ENCODE measurements at regions of chr15 and their contacts with region 1.

Region 1: DNA sequence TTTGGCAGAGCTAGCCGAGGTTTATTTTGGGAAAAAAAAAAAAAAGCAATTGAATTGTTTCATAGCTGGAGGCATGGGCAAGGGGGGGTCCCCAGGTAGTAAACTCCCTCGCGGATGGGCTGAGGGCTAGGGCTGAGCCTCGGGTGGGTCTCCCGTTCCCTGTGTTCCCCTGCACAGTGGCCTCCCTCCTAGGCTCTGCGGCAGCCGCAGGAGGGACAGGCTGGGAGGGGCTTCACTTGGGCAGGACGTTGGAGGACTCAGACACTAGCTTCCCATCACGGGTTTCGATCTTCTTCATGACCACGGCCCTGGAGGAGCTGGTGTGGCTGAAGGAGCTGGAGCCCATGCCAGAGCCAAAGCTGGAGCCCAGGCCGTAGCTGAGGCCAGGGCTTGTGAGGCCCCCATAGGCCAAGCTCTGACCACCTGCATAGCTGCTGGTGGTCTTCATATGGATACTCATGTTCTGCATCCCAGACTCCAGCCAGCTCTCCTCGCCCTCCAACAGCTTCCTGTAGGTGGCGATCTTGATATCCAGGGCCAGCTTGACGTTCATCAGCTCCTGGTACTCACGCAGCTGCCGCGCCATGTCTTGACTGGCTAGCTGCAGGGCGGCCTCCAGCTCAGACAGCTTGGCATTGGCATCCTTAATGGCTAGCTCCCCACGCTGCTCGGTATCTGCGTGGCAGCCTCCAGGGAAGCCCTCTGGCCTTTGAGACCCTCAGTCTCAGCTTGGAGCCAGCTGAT is 64.0 kb upstream of the CDAN1 start:
- DNase-seq: no peak
- ATAC-seq: no peak
- H3K4me3 ChIP-seq: no peak overlapping the region
- H3K27ac ChIP-seq: no peak overlapping the region
- H3K4me1 ChIP-seq: no peaks in the 10 kb centered on the region
- H3K27me3 ChIP-seq: no peaks in the 10 kb centered on the region

Region 2: GRCh38 chr15:42694398-42694797 is 106.5 kb before region 1 on chr15:
- intact Hi-C with region 1: no loop called
- DNase-seq: no peak
- ATAC-seq: no peak
- H3K4me3 ChIP-seq: no peak overlapping the region
- H3K27ac ChIP-seq: no peak overlapping the region
- H3K4me1 ChIP-seq: no peaks in the 10 kb centered on the region
- H3K27me3 ChIP-seq: no peaks in the 10 kb centered on the region

Region 3: GRCh38 chr15:42704492-42704926 is 96.4 kb before region 1 on chr15:
- intact Hi-C with region 1: loop called in 1 of 2 experiments (anchors 10 kb)
- DNase-seq: peak in 1 of 2 donors; percentile 71
- ATAC-seq: peak; percentile 84
- H3K4me3 ChIP-seq: no peak overlapping the region
- H3K27ac ChIP-seq: no peak overlapping the region
- H3K4me1 ChIP-seq: no peaks in the 10 kb centered on the region
- H3K27me3 ChIP-seq: no peaks in the 10 kb centered on the region

Region 4: GRCh38 chr15:42920519-42921227 is 119.8 kb after region 1 on chr15 and contains the start of gene TTBK2:
- intact Hi-C with region 1: loop called (anchors 5 kb)
- DNase-seq: peak; percentile 99
- ATAC-seq: peak; percentile 99
- H3K4me3 ChIP-seq: peak within 1 kb of the TSS; percentile 73 to 86
- H3K27ac ChIP-seq: peak within 1 kb of the TSS; percentile 49 to 66
- H3K4me1 ChIP-seq: peaks cover 0 to 4% of the 10 kb centered on the region in 2 donors
- H3K27me3 ChIP-seq: no peaks in the 10 kb centered on the region
- total RNA-seq, gene TTBK2: 34.4 to 37.6 TPM

Region 5: DNA sequence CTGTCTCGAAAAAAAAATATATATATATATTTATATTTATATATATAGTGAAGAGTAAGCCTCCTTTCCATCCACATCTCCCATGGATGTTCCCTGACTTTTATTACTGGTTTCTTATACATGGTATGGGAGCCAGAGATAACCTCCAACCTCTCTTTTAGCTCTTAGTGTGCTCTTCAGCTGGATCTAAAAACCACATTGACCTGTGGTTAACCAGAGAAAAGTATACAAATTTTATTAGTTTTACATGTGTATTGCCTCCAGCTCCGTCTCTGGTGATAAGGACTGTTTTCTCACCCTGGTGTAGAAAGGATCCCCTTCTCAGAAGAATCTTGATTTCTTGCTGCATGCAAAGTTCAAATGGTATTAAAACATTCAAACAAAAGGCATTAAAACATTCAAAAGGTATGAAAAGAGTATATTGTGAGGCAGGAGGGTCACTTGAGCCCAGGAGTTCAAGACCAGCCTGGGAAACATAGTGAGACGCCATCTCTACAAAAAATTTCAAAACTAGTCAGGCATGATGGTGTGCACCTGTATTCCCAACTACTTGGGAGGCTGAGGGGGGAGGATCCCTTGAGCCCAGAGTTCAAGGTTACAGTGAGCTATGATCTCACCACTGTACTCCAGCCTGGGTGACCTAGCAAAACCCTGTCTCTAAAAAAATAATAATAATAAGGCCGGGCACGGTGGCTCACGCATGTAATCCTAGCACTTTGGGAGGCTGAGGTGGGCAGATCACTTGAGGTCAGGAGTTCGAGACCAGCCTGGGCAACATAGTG is 133.2 kb after region 1 on chr15:
- intact Hi-C with region 1: no loop called
- DNase-seq: no peak
- ATAC-seq: no peak
- H3K4me3 ChIP-seq: no peak overlapping the region
- H3K27ac ChIP-seq: no peak overlapping the region
- H3K4me1 ChIP-seq: peaks cover 0 to 2% of the 10 kb centered on the region in 2 donors
- H3K27me3 ChIP-seq: no peaks in the 10 kb centered on the region

Measured in aorta (tissue), 5 donors.